ENCODE measurements at regions of chr7 and their contacts with region 1.

Region 1: GRCh38 chr7:47266131-47266706 is 315.7 kb downstream of the TNS3 start:
- DNase-seq: peak; percentile 82 to 85
- H3K4me3 ChIP-seq: no peak overlapping the region
- H3K4me3 Mint-ChIP-seq: no peak overlapping the region
- H3K27ac Mint-ChIP-seq: peak overlapping the region; percentile 31
- H3K4me1 ChIP-seq: peaks cover 25% of the 10 kb centered on the region
- H3K4me1 Mint-ChIP-seq: peaks cover 17% of the 10 kb centered on the region
- H3K27me3 ChIP-seq: no peaks in the 10 kb centered on the region
- H3K27me3 Mint-ChIP-seq: no peaks in the 10 kb centered on the region
- CTCF ChIP-seq: peak; percentile 89 to 96

Region 2: GRCh38 chr7:47293884-47294555 is 27.8 kb after region 1 on chr7:
- CTCF ChIA-PET with region 1: interaction called, 19 read pairs
- POLR2A ChIA-PET with region 1: no interaction called
- intact Hi-C with region 1: loop called (anchors 1 kb)
- DNase-seq: no peak
- H3K4me3 ChIP-seq: no peak overlapping the region
- H3K4me3 Mint-ChIP-seq: no peak overlapping the region
- H3K27ac Mint-ChIP-seq: no peak overlapping the region
- H3K4me1 ChIP-seq: peaks cover 26% of the 10 kb centered on the region
- H3K4me1 Mint-ChIP-seq: peaks cover 41% of the 10 kb centered on the region
- H3K27me3 ChIP-seq: no peaks in the 10 kb centered on the region
- H3K27me3 Mint-ChIP-seq: no peaks in the 10 kb centered on the region
- CTCF ChIP-seq: no peak

Region 3: GRCh38 chr7:47379629-47380324 is 113.6 kb after region 1 on chr7:
- CTCF ChIA-PET with region 1: interaction called, 10 read pairs
- POLR2A ChIA-PET with region 1: no interaction called
- intact Hi-C with region 1: loop called (anchors 10 kb)
- DNase-seq: no peak
- H3K4me3 ChIP-seq: no peak overlapping the region
- H3K4me3 Mint-ChIP-seq: no peak overlapping the region
- H3K27ac Mint-ChIP-seq: peak overlapping the region; percentile 57
- H3K4me1 ChIP-seq: peaks cover 39% of the 10 kb centered on the region
- H3K4me1 Mint-ChIP-seq: peaks cover 33% of the 10 kb centered on the region
- H3K27me3 ChIP-seq: no peaks in the 10 kb centered on the region
- H3K27me3 Mint-ChIP-seq: no peaks in the 10 kb centered on the region
- CTCF ChIP-seq: no peak

Region 4: GRCh38 chr7:47818796-47819606 is 552.8 kb after region 1 on chr7:
- CTCF ChIA-PET with region 1: interaction called, 10 read pairs
- POLR2A ChIA-PET with region 1: no interaction called
- intact Hi-C with region 1: loop called (anchors 1 kb)
- DNase-seq: peak; percentile 66 to 82
- H3K4me3 ChIP-seq: no peak overlapping the region
- H3K4me3 Mint-ChIP-seq: no peak overlapping the region
- H3K27ac Mint-ChIP-seq: no peak overlapping the region
- H3K4me1 ChIP-seq: peaks cover 15% of the 10 kb centered on the region
- H3K4me1 Mint-ChIP-seq: peaks cover 26% of the 10 kb centered on the region
- H3K27me3 ChIP-seq: no peaks in the 10 kb centered on the region
- H3K27me3 Mint-ChIP-seq: no peaks in the 10 kb centered on the region
- CTCF ChIP-seq: peak; percentile 96 to 98

Region 5: DNA sequence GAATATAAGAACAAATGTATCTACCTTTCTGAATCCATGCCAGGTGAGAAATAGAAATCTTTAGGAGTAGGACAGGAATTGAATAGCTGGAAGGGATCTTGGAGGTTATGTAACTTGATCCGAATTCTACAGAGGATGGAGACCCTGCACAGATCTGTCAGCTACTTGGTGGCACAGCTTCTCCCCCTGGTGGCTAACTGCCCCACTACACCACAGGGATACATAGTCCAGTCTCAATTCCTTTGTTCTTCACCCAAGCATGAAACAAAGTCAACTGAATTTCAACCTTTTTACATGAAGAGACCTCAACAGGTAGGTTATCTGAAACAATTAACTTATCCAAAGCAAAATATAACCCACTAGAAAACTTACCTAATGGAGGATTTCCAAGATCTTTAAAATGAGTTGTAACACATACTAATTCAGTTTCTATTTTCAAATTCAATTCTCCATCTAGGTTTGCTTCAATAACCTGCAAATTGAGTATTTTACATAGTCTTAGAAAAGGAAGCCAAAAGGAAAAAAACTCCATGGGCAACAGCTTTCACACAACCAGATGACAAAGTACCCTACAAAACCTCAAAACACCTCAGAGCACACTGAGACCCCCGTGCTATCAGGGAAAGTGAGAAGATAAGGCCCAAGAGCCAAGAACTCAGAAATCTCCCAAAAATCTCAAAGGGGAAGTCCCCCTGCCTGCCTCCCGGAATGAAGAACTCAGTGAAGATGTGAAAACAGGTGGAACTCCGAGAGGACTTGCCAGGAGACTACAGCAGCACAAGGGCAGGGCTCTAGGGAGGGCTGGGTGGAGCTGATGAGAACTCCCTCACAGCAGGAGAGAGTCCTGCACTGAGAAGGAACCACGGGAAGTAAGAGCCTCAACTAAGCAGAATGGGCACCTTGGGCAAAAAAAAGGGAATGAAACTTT is 702.9 kb after region 1 on chr7:
- CTCF ChIA-PET with region 1: interaction called, 6 read pairs
- POLR2A ChIA-PET with region 1: no interaction called
- intact Hi-C with region 1: loop called (anchors 2 kb)
- DNase-seq: peak; percentile 76 to 85
- H3K4me3 ChIP-seq: no peak overlapping the region
- H3K4me3 Mint-ChIP-seq: no peak overlapping the region
- H3K27ac Mint-ChIP-seq: no peak overlapping the region
- H3K4me1 ChIP-seq: no peaks in the 10 kb centered on the region
- H3K4me1 Mint-ChIP-seq: peaks cover 6% of the 10 kb centered on the region
- H3K27me3 ChIP-seq: no peaks in the 10 kb centered on the region
- H3K27me3 Mint-ChIP-seq: no peaks in the 10 kb centered on the region
- CTCF ChIP-seq: peak; percentile 95 to 96